Thyroid gland (tissue), 4 donors: ENCODE measurements at regions of chr11 and their contacts with region 1.

Region 1: GRCh38 chr11:87352759-87353707 is 315.3 kb downstream of the TMEM135 start:
- DNase-seq: peak; percentile 73 to 80
- H3K4me3 ChIP-seq: no peak overlapping the region
- H3K27ac ChIP-seq: no peak overlapping the region
- H3K4me1 ChIP-seq: peaks cover 4 to 11% of the 10 kb centered on the region in 2 donors
- H3K27me3 ChIP-seq: no peaks in the 10 kb centered on the region
- CTCF ChIP-seq: peak; percentile 91 to 99 (median 97)
- POLR2A ChIP-seq: no peak

Region 2: DNA sequence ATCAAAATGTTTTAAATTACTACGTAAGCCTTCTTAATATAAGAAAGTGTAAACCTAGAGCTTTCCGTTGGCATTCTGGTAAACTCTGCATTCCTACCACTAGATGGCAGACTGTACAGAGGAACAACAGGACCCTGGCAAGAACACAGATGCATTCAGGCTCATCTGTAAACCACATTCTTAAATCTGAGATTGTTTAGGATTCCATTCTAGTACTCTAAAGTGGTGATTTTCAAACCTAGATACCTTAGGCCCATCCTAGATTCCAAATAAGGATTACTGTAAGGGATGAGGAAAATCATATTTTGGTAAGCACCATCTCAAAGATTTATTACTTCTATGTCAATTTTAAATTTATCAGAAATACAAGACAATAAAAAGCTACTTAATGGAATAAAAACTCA is 1311.1 kb before region 1 on chr11:
- intact Hi-C with region 1: no loop called
- DNase-seq: peak; percentile 67
- H3K4me3 ChIP-seq: no peak overlapping the region
- H3K27ac ChIP-seq: peak overlapping the region in 2 of 3 donors; percentile 50 to 71
- H3K4me1 ChIP-seq: peaks cover 14 to 34% of the 10 kb centered on the region in 2 donors
- H3K27me3 ChIP-seq: no peaks in the 10 kb centered on the region
- CTCF ChIP-seq: peak; percentile 64 to 99 (median 91)
- POLR2A ChIP-seq: no peak

Region 3: DNA sequence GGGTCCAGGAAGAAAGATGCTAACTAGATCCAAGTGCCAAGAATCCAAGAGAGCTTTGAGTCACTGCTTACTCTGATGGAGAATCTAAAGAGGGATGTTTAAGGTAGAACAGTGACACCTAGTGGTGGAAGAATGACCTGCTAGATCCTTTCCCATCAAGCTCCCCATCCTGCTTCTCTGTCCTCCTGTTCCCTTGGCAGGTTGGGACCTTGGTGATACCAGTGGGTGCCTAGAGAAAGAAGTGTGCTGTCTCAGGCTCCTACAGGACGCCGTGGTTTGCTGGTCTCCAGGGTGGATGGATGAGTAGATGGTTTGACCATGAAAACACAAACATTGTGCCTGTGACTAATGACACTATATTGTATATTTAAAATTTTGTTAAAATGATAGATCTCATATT is 68.4 kb after region 1 on chr11:
- intact Hi-C with region 1: loop called (anchors 5 kb)
- DNase-seq: peak; percentile 5 to 15
- H3K4me3 ChIP-seq: no peak overlapping the region
- H3K27ac ChIP-seq: no peak overlapping the region
- H3K4me1 ChIP-seq: no peaks in the 10 kb centered on the region
- H3K27me3 ChIP-seq: no peaks in the 10 kb centered on the region
- CTCF ChIP-seq: peak; percentile 60 to 82 (median 74)
- POLR2A ChIP-seq: no peak

Region 4: DNA sequence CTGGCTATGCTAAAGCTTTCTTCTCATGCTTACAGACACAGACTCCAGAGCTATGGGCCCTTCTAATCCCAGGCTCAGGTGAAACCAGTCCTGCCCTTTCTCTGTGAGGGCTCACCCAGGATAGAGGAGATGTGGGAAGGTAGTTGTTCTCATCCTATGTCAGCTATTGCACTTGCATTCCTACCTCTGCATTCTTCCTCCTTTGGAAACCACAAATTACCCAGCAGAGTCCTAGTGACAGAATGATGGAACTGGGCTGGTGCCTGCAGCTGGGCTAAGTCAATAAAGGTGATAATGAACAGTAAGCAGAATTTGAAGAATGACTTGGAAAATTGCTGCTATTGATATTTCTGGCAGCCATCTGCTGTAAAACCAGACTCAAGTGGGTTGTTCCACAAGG is 244.7 kb after region 1 on chr11:
- intact Hi-C with region 1: no loop called
- DNase-seq: no peak
- H3K4me3 ChIP-seq: no peak overlapping the region
- H3K27ac ChIP-seq: no peak overlapping the region
- H3K4me1 ChIP-seq: no peaks in the 10 kb centered on the region
- H3K27me3 ChIP-seq: no peaks in the 10 kb centered on the region
- CTCF ChIP-seq: no peak
- POLR2A ChIP-seq: no peak